ENCODE measurements at regions of chr2 and their contacts with region 1.

Region 1: DNA sequence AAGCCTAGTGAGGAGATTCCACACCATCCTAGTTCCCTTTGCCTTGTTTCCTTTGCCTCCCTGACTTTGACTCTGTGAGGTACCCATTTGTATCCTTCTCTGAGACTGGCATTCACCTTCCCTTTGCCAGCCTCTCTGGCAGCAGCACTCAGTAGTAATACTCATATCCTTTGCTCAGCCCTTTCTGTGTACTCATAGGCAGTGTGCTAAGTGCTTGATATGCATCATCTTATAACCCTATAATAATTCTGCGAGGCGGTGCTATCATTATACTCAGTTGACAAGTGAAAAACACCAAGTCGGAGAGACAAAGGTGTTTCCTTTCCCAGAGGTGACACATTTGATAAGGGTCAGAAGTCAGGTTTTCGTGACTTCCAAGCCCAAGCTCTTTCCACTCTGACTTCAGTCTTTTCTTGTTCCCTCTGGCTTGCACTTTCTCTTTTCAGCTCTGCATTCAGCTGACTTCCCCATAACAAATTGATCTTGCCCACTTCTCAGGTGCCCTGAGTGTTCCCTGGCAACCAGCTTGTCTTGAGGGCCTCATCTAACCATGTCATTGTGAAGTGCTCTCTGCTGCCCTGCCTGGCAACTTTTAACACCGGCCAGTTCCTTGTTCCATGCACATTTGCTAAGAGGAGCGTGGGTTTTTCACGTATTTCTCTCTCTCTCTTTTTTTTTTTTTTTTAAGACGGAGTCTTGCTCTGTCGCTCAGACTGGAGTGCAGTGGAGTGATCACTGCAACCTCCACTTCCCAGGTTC is 94.5 kb upstream of the UPP2 start:
- DNase-seq: peak in 3 of 9 donors; percentile 14 to 20 (median 18)
- ATAC-seq: peak; percentile 55
- H3K4me3 ChIP-seq: no peak overlapping the region
- H3K4me3 Mint-ChIP-seq: no peak overlapping the region
- H3K27ac ChIP-seq: no peak overlapping the region
- H3K27ac Mint-ChIP-seq: peak overlapping the region in 1 of 9 donors; percentile 1
- H3K4me1 ChIP-seq: no peaks in the 10 kb centered on the region
- H3K4me1 Mint-ChIP-seq: peaks cover 5 to 26% (median 8%) of the 10 kb centered on the region in 7 donors
- H3K27me3 ChIP-seq: no peaks in the 10 kb centered on the region
- H3K27me3 Mint-ChIP-seq: peaks cover 0 to 9% (median 2%) of the 10 kb centered on the region in 5 donors

Region 2: GRCh38 chr2:157492189-157492773 is 514.9 kb before region 1 on chr2:
- CTCF ChIA-PET with region 1: interaction called, 4 read pairs
- POLR2A ChIA-PET with region 1: no interaction called
- intact Hi-C with region 1: loop called (anchors 1 kb)
- DNase-seq: peak; percentile 41 to 79 (median 68)
- ATAC-seq: peak; percentile 91
- H3K4me3 ChIP-seq: no peak overlapping the region
- H3K4me3 Mint-ChIP-seq: peak overlapping the region in 6 of 10 donors; percentile 1 to 39 (median 14)
- H3K27ac ChIP-seq: no peak overlapping the region
- H3K27ac Mint-ChIP-seq: peak overlapping the region in 3 of 9 donors; percentile 9 to 19 (median 13)
- H3K4me1 ChIP-seq: peaks cover 0 to 21% of the 10 kb centered on the region in 2 donors
- H3K4me1 Mint-ChIP-seq: peaks cover 10 to 67% (median 59%) of the 10 kb centered on the region in 7 donors
- H3K27me3 ChIP-seq: no peaks in the 10 kb centered on the region
- H3K27me3 Mint-ChIP-seq: no peaks in the 10 kb centered on the region

Region 3: DNA sequence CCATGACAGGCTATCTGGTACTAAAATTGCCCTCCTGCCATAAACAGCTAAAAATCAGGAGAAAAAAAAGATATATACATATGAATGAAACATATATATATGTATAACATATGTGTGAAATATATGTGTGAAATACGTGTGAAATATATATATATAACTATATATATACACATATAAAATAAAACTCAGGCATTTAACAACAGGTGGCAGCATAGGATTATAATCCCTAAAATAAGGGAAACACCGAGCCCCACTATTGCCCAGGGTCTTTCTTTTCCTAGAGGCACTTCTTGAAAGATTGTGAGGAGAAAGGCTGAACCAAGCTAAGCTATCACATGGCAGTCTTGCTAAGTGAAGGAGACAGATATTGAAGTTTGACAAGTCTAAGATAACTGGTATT is 497.4 kb before region 1 on chr2:
- CTCF ChIA-PET with region 1: interaction called, 4 read pairs
- POLR2A ChIA-PET with region 1: no interaction called
- intact Hi-C with region 1: loop called in 1 of 2 experiments (anchors 1 kb)
- DNase-seq: no peak
- ATAC-seq: no peak
- H3K4me3 ChIP-seq: no peak overlapping the region
- H3K4me3 Mint-ChIP-seq: no peak overlapping the region
- H3K27ac ChIP-seq: no peak overlapping the region
- H3K27ac Mint-ChIP-seq: no peak overlapping the region
- H3K4me1 ChIP-seq: no peaks in the 10 kb centered on the region
- H3K4me1 Mint-ChIP-seq: peaks cover 0 to 6% (median 0%) of the 10 kb centered on the region in 7 donors
- H3K27me3 ChIP-seq: no peaks in the 10 kb centered on the region
- H3K27me3 Mint-ChIP-seq: peaks cover 0 to 40% (median 17%) of the 10 kb centered on the region in 5 donors

Region 4: GRCh38 chr2:157777427-157777826 is 229.7 kb before region 1 on chr2:
- CTCF ChIA-PET with region 1: interaction called, 7 read pairs
- POLR2A ChIA-PET with region 1: interaction called, 3 read pairs
- intact Hi-C with region 1: loop called (anchors 1 kb)
- DNase-seq: peak in 7 of 9 donors; percentile 12 to 57 (median 43)
- ATAC-seq: peak; percentile 57
- H3K4me3 ChIP-seq: no peak overlapping the region
- H3K4me3 Mint-ChIP-seq: no peak overlapping the region
- H3K27ac ChIP-seq: no peak overlapping the region
- H3K27ac Mint-ChIP-seq: no peak overlapping the region
- H3K4me1 ChIP-seq: peaks cover 0 to 3% of the 10 kb centered on the region in 2 donors
- H3K4me1 Mint-ChIP-seq: peaks cover 0 to 17% (median 13%) of the 10 kb centered on the region in 7 donors
- H3K27me3 ChIP-seq: no peaks in the 10 kb centered on the region
- H3K27me3 Mint-ChIP-seq: no peaks in the 10 kb centered on the region

Region 5: DNA sequence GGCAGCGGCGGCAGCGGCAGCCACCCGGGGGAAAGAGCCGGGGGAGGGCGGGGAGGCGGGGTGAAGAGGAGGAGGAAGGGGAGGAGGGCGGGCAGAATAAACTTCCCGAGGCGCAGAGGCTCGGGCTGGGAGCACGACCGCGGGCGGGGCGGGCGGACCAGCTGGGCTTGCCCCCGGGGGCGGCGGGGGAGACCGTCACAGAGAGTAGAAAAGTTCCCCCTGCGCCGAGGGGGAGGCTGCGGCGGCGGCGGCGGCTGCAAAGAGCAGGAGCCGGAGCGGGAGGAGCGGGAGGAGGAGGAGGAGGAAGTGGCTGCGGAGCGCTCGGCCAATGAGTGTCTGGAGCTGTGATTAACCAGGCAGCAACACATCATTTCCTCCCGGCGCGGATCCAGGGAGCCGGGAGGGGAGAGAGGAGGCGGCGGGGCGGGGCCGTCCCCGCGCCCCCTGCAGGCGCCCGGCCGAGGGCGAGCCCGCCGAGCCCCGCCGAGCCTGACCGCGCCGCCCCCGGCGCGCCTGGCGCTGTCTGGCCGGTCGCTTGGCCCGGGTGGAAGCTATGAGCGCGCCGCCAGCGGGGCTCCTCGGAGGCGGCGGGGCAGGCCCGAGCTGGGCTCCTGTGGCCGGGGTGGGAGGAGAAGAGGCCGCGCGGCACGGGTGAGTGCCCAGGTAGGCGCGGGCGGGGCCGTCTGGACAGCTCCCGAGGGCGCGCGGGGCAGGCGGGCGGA is 130.9 kb before region 1 on chr2 and contains the start of gene ACVR1:
- CTCF ChIA-PET with region 1: interaction called, 3 read pairs
- POLR2A ChIA-PET with region 1: no interaction called
- intact Hi-C with region 1: loop called (anchors 2 kb)
- DNase-seq: peak; percentile 68 to 85 (median 75)
- ATAC-seq: peak; percentile 86
- H3K4me3 ChIP-seq: peak within 1 kb of the TSS; percentile 60
- H3K4me3 Mint-ChIP-seq: peak within 1 kb of the TSS; percentile 90 to 98 (median 96)
- H3K27ac ChIP-seq: peak within 1 kb of the TSS; percentile 77
- H3K27ac Mint-ChIP-seq: peak within 1 kb of the TSS; percentile 83 to 96 (median 90)
- H3K4me1 ChIP-seq: peaks cover 12 to 19% of the 10 kb centered on the region in 2 donors
- H3K4me1 Mint-ChIP-seq: peaks cover 24 to 63% (median 53%) of the 10 kb centered on the region in 7 donors
- H3K27me3 ChIP-seq: no peaks in the 10 kb centered on the region
- H3K27me3 Mint-ChIP-seq: no peaks in the 10 kb centered on the region
- total RNA-seq, gene ACVR1: 13.3 to 42.0 (median 20.6) TPM

Measured in naive thymus-derived CD4-positive, alpha-beta T cell (primary cell).